Stomach (tissue), 19 donors: ENCODE measurements at regions of chr15 and their contacts with region 1.

Region 1: DNA sequence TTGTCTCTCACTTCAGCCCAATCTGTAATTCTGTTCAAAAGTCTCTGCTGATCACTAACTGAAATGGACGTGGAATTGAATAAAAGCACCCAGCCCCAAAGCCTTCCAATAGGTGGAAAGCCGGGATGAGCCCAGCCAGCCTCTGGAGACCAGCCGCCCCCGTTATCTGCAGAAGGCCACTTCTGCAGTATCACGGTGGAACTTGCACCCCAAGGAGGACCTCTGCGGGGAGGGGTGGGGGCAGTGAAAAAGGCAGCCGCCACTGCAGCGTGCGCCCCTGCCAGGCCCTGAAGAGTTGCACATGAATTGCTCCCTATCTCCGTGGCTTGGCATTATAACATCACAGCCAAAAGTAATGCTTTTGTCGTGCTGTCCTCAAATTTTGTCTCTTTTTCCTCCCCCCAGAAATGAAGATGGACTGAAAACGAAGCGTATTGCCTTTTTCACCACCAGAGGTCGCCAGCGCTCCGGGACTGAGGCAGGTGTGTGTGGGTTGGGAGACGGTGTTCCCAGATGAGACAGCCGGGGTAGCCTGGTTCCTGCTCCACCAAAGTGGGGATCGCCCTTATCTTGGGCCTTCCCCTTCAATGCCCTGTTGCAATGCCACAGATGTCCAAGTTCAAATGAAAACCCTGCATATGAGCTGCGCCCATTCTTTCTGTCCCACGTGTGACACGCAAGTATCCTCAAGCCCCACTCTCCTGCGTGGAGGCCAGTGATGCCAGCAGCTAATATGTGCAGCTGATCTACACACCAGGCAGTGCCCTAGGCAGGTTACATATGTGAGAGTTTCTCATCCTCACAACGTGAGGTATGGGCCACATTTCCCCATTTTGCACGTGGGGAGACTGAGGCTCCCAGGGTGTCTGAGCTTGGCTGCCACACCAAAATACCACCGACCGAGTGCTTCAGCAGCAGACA is 96.0 kb downstream of the LRRK1 start:
- DNase-seq: peak; percentile 79 to 88
- H3K4me3 ChIP-seq: no peak overlapping the region
- H3K27ac ChIP-seq: no peak overlapping the region
- H3K4me1 ChIP-seq: peaks cover 0 to 16% (median 2%) of the 10 kb centered on the region in 4 donors
- H3K27me3 ChIP-seq: no peaks in the 10 kb centered on the region
- CTCF ChIP-seq: peak in 5 of 7 experiments; percentile 61 to 85 (median 77)
- EP300 ChIP-seq: no peak
- POLR2A ChIP-seq: no peak

Region 2: GRCh38 chr15:101088788-101089583 is 73.8 kb after region 1 on chr15:
- intact Hi-C with region 1: loop called (anchors 10 kb)
- DNase-seq: peak; percentile 84 to 88
- H3K4me3 ChIP-seq: peak overlapping the region; percentile 18 to 41 (median 34)
- H3K27ac ChIP-seq: peak overlapping the region in 1 of 5 donors; percentile 43
- H3K4me1 ChIP-seq: peaks cover 7 to 28% (median 21%) of the 10 kb centered on the region in 4 donors
- H3K27me3 ChIP-seq: no peaks in the 10 kb centered on the region
- CTCF ChIP-seq: peak in 6 of 7 experiments; percentile 76 to 100 (median 98)
- EP300 ChIP-seq: no peak
- POLR2A ChIP-seq: peak in 1 of 4 donors; percentile 54

Region 3: GRCh38 chr15:101264911-101265641 is 249.9 kb after region 1 on chr15:
- intact Hi-C with region 1: loop called (anchors 5 kb)
- DNase-seq: peak in 1 of 2 donors; percentile 50
- H3K4me3 ChIP-seq: no peak overlapping the region
- H3K27ac ChIP-seq: peak overlapping the region in 2 of 5 donors; percentile 34 to 67
- H3K4me1 ChIP-seq: peaks cover 4 to 13% (median 6%) of the 10 kb centered on the region in 4 donors
- H3K27me3 ChIP-seq: no peaks in the 10 kb centered on the region
- CTCF ChIP-seq: no peak
- EP300 ChIP-seq: no peak
- POLR2A ChIP-seq: no peak

Region 4: GRCh38 chr15:101277038-101277882 is 262.1 kb after region 1 on chr15 and contains the start of gene SELENOS:
- intact Hi-C with region 1: no loop called
- DNase-seq: peak; percentile 95 to 98
- H3K4me3 ChIP-seq: peak within 1 kb of the TSS; percentile 74 to 89 (median 81)
- H3K27ac ChIP-seq: peak within 1 kb of the TSS; percentile 93 to 99 (median 96)
- H3K4me1 ChIP-seq: peaks cover 14 to 32% (median 23%) of the 10 kb centered on the region in 4 donors
- H3K27me3 ChIP-seq: no peaks in the 10 kb centered on the region
- CTCF ChIP-seq: no peak
- EP300 ChIP-seq: no peak
- POLR2A ChIP-seq: no peak
- total RNA-seq, gene SELENOS: 71.7 to 184 (median 86.9) TPM